Activated B cell treated with CpG ODN at 0.5 μM for 24 hours (primary cell): ENCODE measurements at regions of chr2 and their contacts with region 1.

Region 1: GRCh38 chr2:121400201-121400600 is 115.2 kb upstream of the TFCP2L1 start:
- DNase-seq: no peak
- ATAC-seq: no peak
- H3K4me3 Mint-ChIP-seq: no peak overlapping the region
- H3K27ac Mint-ChIP-seq: no peak overlapping the region
- H3K4me1 Mint-ChIP-seq: peaks cover 2% of the 10 kb centered on the region
- H3K27me3 Mint-ChIP-seq: no peaks in the 10 kb centered on the region
- CTCF ChIP-seq: no peak

Region 2: DNA sequence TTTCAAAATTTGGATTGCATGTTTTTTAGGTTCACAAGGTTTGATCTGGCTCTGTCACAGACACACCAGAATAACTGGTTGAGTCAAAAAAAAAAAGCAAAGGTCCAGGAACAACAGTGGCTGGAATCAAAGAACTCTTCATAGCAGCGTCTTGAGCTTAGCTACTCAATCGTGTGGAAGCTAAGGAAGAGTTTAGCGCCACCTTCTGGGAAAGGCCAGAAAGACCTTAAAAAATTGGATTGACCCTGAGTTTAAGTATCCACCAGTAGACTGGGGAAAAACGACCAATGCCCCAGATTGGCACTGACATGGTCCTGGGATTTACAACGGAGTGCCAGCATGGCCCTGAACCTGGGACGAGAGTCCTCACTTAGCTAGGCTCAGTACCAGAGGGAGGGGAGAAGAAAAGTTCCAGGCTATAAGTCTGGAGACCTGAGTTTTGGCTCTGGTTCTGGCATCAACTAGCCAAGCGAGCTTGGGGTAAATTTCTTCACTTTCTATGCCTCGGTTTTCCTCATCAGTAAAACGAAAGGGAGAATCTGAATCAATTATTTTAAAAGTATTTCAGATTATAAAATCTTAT is 44.1 kb before region 1 on chr2:
- CTCF ChIA-PET with region 1: no interaction called
- POLR2A ChIA-PET with region 1: no interaction called
- intact Hi-C with region 1: no loop called
- DNase-seq: no peak
- ATAC-seq: no peak
- H3K4me3 Mint-ChIP-seq: no peak overlapping the region
- H3K27ac Mint-ChIP-seq: no peak overlapping the region
- H3K4me1 Mint-ChIP-seq: no peaks in the 10 kb centered on the region
- H3K27me3 Mint-ChIP-seq: no peaks in the 10 kb centered on the region
- CTCF ChIP-seq: no peak

Region 3: DNA sequence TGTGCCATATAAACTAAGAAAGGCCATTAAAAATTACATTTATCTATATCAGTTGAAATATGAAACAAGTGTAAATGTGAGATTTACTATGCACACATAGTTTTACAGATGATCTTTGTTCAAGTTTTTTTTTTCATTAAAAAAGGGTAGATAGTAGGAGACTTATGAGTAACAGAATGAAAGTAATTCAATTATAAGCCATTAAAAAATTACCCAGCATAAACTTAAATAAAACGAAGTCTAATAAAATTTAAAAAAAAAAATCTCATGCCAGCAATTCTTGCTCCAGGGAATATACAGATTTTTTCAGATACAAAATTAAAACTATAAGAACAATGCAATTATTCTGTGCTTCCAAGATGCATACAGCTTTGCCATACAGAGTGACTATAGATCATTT is 12.1 kb after region 1 on chr2:
- CTCF ChIA-PET with region 1: interaction called, 12 read pairs
- POLR2A ChIA-PET with region 1: no interaction called
- intact Hi-C with region 1: no loop called
- DNase-seq: no peak
- ATAC-seq: no peak
- H3K4me3 Mint-ChIP-seq: no peak overlapping the region
- H3K27ac Mint-ChIP-seq: no peak overlapping the region
- H3K4me1 Mint-ChIP-seq: no peaks in the 10 kb centered on the region
- H3K27me3 Mint-ChIP-seq: no peaks in the 10 kb centered on the region
- CTCF ChIP-seq: no peak

Region 4: GRCh38 chr2:121722479-121722878 is 322.3 kb after region 1 on chr2:
- CTCF ChIA-PET with region 1: interaction called, 40 read pairs
- POLR2A ChIA-PET with region 1: interaction called, 3 read pairs
- intact Hi-C with region 1: no loop called
- DNase-seq: no peak
- ATAC-seq: no peak
- H3K4me3 Mint-ChIP-seq: no peak overlapping the region
- H3K27ac Mint-ChIP-seq: no peak overlapping the region
- H3K4me1 Mint-ChIP-seq: peaks cover 3% of the 10 kb centered on the region
- H3K27me3 Mint-ChIP-seq: no peaks in the 10 kb centered on the region
- CTCF ChIP-seq: no peak

Region 5: GRCh38 chr2:121748202-121748601 is 348.0 kb after region 1 on chr2:
- CTCF ChIA-PET with region 1: interaction called, 3 read pairs
- POLR2A ChIA-PET with region 1: no interaction called
- intact Hi-C with region 1: loop called (anchors 1 kb)
- DNase-seq: no peak
- ATAC-seq: peak; percentile 52
- H3K4me3 Mint-ChIP-seq: no peak overlapping the region
- H3K27ac Mint-ChIP-seq: no peak overlapping the region
- H3K4me1 Mint-ChIP-seq: no peaks in the 10 kb centered on the region
- H3K27me3 Mint-ChIP-seq: peaks cover 2% of the 10 kb centered on the region
- CTCF ChIP-seq: no peak